Heart right ventricle (tissue), 16 donors: ENCODE measurements at regions of chr17 and their contacts with region 1.

Region 1: GRCh38 chr17:73311781-73312641 is at the start of gene CDC42EP4:
- DNase-seq: peak; percentile 96 to 97
- ATAC-seq: peak; percentile 90 to 95 (median 93)
- H3K4me3 ChIP-seq: peak within 1 kb of the TSS; percentile 86 to 100 (median 97)
- H3K27ac ChIP-seq: peak within 1 kb of the TSS; percentile 97 to 99 (median 99)
- H3K4me1 ChIP-seq: peaks cover 20 to 46% (median 43%) of the 10 kb centered on the region in 9 donors
- H3K27me3 ChIP-seq: no peaks in the 10 kb centered on the region
- CTCF ChIP-seq: no peak
- total RNA-seq, gene CDC42EP4: 22.0 to 87.6 (median 32.1) TPM

Region 2: GRCh38 chr17:73192894-73193701 is 118.9 kb before region 1 on chr17 and contains the start of gene COG1:
- intact Hi-C with region 1: loop called in 1 of 10 experiments (anchors 5 kb)
- DNase-seq: peak; percentile 91 to 92
- ATAC-seq: peak; percentile 88 to 93 (median 90)
- H3K4me3 ChIP-seq: peak within 1 kb of the TSS; percentile 67 to 98 (median 92)
- H3K27ac ChIP-seq: peak within 1 kb of the TSS; percentile 58 to 96 (median 90)
- H3K4me1 ChIP-seq: peaks cover 3 to 25% (median 15%) of the 10 kb centered on the region in 9 donors
- H3K27me3 ChIP-seq: no peaks in the 10 kb centered on the region
- CTCF ChIP-seq: no peak
- total RNA-seq, gene COG1: 44.4 to 70.6 (median 58.0) TPM

Region 3: DNA sequence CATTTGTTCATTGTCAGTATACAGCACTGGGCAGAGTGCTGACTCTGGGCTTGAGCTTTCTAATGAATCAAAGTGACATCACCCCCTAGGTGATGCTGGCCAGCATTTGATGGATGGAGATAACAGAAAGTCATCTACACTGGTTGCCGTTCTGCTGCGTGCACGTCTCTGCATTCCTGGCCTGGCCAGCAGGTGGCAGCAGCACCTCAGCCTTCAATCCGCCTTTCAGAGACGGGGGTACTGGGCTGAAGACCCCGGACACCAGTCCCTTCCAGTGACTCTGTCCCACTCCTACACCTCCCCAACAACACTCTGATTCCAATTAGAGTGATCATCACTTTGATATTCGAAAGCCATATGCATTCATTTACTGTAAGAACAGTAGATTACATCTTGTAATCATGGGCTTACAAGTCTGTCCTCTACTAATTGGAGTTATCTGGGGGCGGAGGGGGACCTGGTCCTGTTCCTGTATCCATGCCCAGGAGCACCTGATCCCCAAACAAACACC is 56.3 kb before region 1 on chr17:
- intact Hi-C with region 1: loop called in 2 of 10 experiments (anchors 5 kb)
- DNase-seq: peak; percentile 55 to 64
- ATAC-seq: peak; percentile 63 to 87 (median 72)
- H3K4me3 ChIP-seq: no peak overlapping the region
- H3K27ac ChIP-seq: no peak overlapping the region
- H3K4me1 ChIP-seq: peaks cover 0 to 8% (median 0%) of the 10 kb centered on the region in 9 donors
- H3K27me3 ChIP-seq: no peaks in the 10 kb centered on the region
- CTCF ChIP-seq: peak in 8 of 9 donors; percentile 94 to 99 (median 98)

Region 4: GRCh38 chr17:73278465-73279453 is 33.3 kb before region 1 on chr17:
- intact Hi-C with region 1: loop called in 3 of 10 experiments (anchors 2 to 5 kb)
- DNase-seq: peak in 1 of 2 donors; percentile 37
- ATAC-seq: peak; percentile 19 to 74 (median 58)
- H3K4me3 ChIP-seq: no peak overlapping the region
- H3K27ac ChIP-seq: peak overlapping the region; percentile 49 to 83 (median 72)
- H3K4me1 ChIP-seq: peaks cover 13 to 48% (median 34%) of the 10 kb centered on the region in 9 donors
- H3K27me3 ChIP-seq: no peaks in the 10 kb centered on the region
- CTCF ChIP-seq: no peak

Region 5: DNA sequence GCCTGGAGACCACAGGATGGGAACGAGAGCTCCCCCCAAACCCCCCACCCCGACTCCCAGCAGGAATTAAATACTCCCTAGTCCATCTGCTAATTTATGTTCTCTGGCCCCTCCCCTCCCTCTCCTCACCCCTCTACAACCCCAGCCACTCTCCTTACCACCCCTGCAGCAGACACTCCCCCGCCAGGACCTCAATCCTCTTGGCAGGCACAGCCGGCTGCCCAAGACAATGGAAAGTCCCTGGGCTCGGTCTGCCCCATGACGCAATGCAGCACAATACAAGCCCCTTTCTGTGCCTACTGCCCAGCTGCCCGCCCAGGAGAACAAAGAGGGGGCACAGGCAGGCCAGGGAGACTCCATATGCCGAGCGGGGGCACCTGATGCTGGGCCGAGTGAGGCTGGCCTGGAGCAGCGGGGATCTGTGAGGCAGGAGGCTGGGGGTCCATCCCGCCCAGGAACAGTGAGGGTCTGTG is 30.1 kb after region 1 on chr17:
- intact Hi-C with region 1: loop called in 2 of 10 experiments (anchors 2 kb)
- DNase-seq: peak; percentile 65 to 67
- ATAC-seq: peak; percentile 49 to 89 (median 78)
- H3K4me3 ChIP-seq: no peak overlapping the region
- H3K27ac ChIP-seq: peak overlapping the region in 6 of 10 donors; percentile 41 to 71 (median 57)
- H3K4me1 ChIP-seq: peaks cover 3 to 38% (median 27%) of the 10 kb centered on the region in 9 donors
- H3K27me3 ChIP-seq: no peaks in the 10 kb centered on the region
- CTCF ChIP-seq: no peak

Region 6: GRCh38 chr17:73359987-73360410 is 48.0 kb after region 1 on chr17:
- intact Hi-C with region 1: loop called in 7 of 10 experiments (anchors 5 to 10 kb)
- DNase-seq: peak in 1 of 2 donors; percentile 64
- ATAC-seq: peak in 6 of 8 donors; percentile 21 to 78 (median 56)
- H3K4me3 ChIP-seq: no peak overlapping the region
- H3K27ac ChIP-seq: peak overlapping the region in 1 of 10 donors; percentile 34
- H3K4me1 ChIP-seq: peaks cover 4 to 43% (median 28%) of the 10 kb centered on the region in 9 donors
- H3K27me3 ChIP-seq: no peaks in the 10 kb centered on the region
- CTCF ChIP-seq: peak in 3 of 9 donors; percentile 17 to 23 (median 17)

Region 7: DNA sequence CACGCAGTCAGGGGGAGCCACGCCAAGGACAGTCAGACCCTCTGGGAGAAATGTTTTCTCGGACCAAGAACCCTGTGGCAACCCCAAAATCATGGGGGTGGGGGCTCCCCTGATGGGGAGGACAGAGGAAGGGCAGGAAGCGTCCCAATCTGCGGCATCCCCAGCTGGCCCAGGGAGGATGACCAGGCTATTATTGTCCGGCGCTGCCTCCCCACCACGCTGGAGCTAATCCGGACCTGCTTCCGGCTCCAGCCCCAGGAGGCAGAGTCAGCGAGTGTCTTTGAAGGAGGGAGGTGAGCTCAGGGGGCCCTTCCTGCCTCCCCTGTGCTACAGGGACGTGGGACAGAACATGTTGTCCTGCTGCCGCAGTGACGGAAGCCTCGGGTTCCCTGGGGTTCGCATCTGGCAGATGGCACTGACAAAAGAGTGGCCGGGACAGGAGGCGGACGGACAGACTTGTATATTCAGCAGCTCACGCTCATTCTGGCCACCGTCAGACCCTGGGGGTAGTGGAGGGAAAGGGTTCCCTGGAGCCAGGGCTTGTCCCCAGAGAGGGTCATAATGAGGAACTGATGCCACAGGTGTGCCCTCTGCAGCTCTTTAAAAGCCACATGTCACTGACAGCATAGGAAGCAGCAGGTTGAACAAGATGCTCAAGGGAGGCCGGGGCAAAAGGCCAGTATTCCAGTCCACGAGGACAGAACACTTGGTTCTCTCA is 54.1 kb after region 1 on chr17:
- intact Hi-C with region 1: loop called (anchors 2 to 10 kb)
- DNase-seq: peak; percentile 65 to 66
- ATAC-seq: peak; percentile 40 to 88 (median 70)
- H3K4me3 ChIP-seq: peak overlapping the region in 6 of 10 donors; percentile 4 to 24 (median 9)
- H3K27ac ChIP-seq: peak overlapping the region; percentile 65 to 82 (median 74)
- H3K4me1 ChIP-seq: peaks cover 10 to 32% (median 27%) of the 10 kb centered on the region in 9 donors
- H3K27me3 ChIP-seq: no peaks in the 10 kb centered on the region
- CTCF ChIP-seq: no peak

Region 8: GRCh38 chr17:73532421-73532901 is 220.4 kb after region 1 on chr17:
- intact Hi-C with region 1: no loop called
- DNase-seq: no peak
- ATAC-seq: peak in 1 of 8 donors; percentile 17
- H3K4me3 ChIP-seq: no peak overlapping the region
- H3K27ac ChIP-seq: no peak overlapping the region
- H3K4me1 ChIP-seq: peaks cover 0 to 10% (median 0%) of the 10 kb centered on the region in 9 donors
- H3K27me3 ChIP-seq: no peaks in the 10 kb centered on the region
- CTCF ChIP-seq: no peak